ENCODE measurements at regions of chr16 and their contacts with region 1.

Region 1: DNA sequence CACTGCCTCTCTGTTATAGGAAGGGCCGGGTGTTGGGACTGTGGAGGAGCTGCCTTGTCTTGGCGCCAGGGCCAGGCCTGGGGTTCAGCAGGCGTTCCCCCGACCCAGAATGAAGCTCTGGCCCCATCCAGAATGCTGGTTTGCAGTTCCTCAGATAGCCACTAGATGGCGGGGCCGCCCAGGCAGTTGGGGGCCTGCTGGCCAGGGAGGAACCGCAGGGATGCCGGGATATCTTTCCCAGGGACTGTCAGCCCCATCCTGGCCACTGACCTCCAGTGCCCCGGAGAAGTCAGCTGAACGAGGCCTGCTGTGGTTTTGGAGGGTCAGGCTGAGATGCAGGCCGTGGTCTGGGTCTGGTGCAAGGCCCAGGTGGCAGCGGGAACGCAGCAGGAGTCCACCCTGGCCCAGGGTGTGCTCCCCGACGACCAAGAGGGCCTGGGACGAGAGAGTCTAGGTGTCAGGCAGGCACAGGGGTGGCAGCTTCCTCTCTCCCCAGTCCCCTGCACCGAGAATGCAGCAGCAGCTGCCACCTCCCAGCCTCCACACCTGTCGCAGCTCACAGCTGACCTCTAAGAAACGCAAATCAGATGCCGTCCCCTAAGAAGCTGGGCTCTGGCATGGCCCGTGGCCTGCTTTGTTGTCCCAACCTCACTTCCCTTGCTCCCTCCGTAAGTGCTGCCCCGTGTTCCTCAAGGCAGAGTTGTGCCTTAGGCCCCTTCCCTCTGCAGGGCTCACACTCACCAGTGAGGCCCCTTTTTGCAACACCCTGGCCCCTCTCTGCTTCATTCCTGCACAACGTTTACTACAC is 51.2 kb downstream of the RMI2 start:
- DNase-seq: peak; percentile 73
- H3K4me3 ChIP-seq: no peak overlapping the region
- H3K27ac ChIP-seq: no peak overlapping the region
- H3K4me1 ChIP-seq: no peaks in the 10 kb centered on the region
- H3K27me3 ChIP-seq: no peaks in the 10 kb centered on the region
- CTCF ChIP-seq: peak; percentile 100

Region 2: GRCh38 chr16:11175787-11176341 is 220.6 kb before region 1 on chr16:
- intact Hi-C with region 1: no loop called
- DNase-seq: no peak
- H3K4me3 ChIP-seq: no peak overlapping the region
- H3K27ac ChIP-seq: no peak overlapping the region
- H3K4me1 ChIP-seq: no peaks in the 10 kb centered on the region
- H3K27me3 ChIP-seq: no peaks in the 10 kb centered on the region
- CTCF ChIP-seq: no peak

Region 3: DNA sequence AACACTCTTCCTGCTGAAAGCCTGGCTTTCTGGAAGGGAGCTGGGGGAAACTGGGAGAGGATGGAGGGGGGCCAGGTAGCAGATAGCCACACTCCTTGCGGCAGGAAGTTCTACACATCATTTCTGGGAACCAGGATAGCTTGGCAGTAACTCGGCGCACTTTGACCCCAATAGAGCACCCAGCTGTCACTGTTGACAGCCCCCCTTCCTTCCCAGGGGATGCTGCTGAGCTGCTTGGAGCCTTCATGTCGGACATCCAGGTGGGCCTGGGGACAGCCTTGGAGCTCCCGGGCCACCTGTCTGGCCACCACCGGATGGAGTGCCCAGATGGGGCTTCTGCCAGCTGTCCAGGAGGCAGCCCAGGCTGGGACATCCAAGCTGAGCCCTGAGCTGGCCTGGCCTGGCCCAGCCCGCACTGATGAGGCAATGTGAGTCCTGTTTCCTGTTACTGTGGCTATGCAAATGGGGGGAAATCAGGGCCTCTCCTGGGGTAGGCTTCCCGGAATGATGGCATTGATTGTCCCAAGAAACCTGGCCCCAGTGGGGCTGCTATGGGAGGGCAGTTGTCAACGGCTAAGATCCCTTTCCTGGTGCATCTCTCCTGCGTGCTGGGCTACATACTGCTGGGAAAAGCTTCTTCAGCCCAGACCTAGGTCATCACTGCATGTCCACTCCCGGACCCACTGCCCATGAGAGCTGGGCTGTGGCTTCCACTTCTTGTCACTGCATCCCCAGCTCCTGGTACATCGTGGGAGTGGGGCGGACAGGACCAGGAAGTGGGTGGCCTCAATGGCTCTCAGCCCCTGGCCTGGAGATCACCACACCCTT is 190.5 kb before region 1 on chr16:
- intact Hi-C with region 1: no loop called
- DNase-seq: peak; percentile 53
- H3K4me3 ChIP-seq: no peak overlapping the region
- H3K27ac ChIP-seq: peak overlapping the region; percentile 45
- H3K4me1 ChIP-seq: peaks cover 10% of the 10 kb centered on the region
- H3K27me3 ChIP-seq: no peaks in the 10 kb centered on the region
- CTCF ChIP-seq: no peak

Region 4: DNA sequence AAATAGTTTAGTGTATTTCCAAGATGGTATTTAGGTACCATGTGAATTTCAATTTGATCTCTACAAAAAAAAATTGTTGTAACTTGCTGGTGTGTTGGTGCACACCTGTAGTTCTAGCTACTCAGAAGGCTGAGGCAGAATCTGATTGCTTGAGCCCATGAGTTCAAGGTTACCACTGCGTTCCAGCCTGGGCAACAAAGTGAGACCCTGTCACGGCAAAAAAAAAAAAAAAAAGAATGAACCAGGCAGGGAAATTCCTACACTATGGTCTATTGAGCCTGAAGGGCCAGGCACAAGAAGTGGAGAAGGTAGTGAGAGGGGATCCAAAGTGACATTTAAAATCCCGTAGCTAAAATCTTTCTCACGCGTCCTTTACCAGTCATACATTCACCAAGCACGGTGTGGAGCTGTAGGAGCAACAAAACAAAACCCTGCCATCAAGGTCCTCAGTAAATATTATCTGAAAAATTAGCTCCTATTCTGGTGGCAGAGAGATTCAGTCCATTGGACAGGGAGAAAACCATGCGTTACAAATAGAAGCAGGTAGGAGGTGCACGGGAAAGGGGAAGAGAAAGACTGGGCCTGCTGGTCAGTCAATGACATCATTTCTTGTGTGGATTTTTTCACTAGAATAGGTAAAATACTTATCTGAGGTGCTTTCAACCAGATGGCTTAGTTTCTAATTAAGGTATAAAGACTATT is 319.0 kb after region 1 on chr16:
- intact Hi-C with region 1: loop called (anchors 5 kb)
- DNase-seq: no peak
- H3K4me3 ChIP-seq: no peak overlapping the region
- H3K27ac ChIP-seq: no peak overlapping the region
- H3K4me1 ChIP-seq: no peaks in the 10 kb centered on the region
- H3K27me3 ChIP-seq: no peaks in the 10 kb centered on the region
- CTCF ChIP-seq: no peak

Region 5: GRCh38 chr16:11819798-11820197 is 423.4 kb after region 1 on chr16:
- intact Hi-C with region 1: loop called (anchors 10 kb)
- DNase-seq: no peak
- H3K4me3 ChIP-seq: no peak overlapping the region
- H3K27ac ChIP-seq: no peak overlapping the region
- H3K4me1 ChIP-seq: no peaks in the 10 kb centered on the region
- H3K27me3 ChIP-seq: no peaks in the 10 kb centered on the region
- CTCF ChIP-seq: no peak

Region 6: GRCh38 chr16:12067714-12068401 is 671.4 kb after region 1 on chr16:
- intact Hi-C with region 1: loop called (anchors 10 kb)
- DNase-seq: peak; percentile 58
- H3K4me3 ChIP-seq: no peak overlapping the region
- H3K27ac ChIP-seq: no peak overlapping the region
- H3K4me1 ChIP-seq: no peaks in the 10 kb centered on the region
- H3K27me3 ChIP-seq: no peaks in the 10 kb centered on the region
- CTCF ChIP-seq: peak; percentile 93